ENCODE measurements at regions of chr11 and their contacts with region 1.

Region 1: GRCh38 chr11:62169091-62169847 is 20.7 kb upstream of the SCGB1D1 start:
- DNase-seq: no peak
- ATAC-seq: no peak
- H3K4me3 ChIP-seq: no peak overlapping the region
- H3K27ac ChIP-seq: no peak overlapping the region
- H3K4me1 ChIP-seq: peaks cover 0 to 4% of the 10 kb centered on the region in 2 experiments; a peak in 1 of 4 replicates
- H3K27me3 ChIP-seq: 0 out of 2 replicates have a peak, but pooled peaks cover 3% of the 10 kb centered on the region
- CTCF ChIP-seq: no peak
- POLR2A ChIP-seq: no peak
- RAD21 ChIP-seq: no peak

Region 2: GRCh38 chr11:61141601-61142028 is 1027.7 kb before region 1 on chr11:
- CTCF ChIA-PET with region 1: no interaction called
- POLR2A ChIA-PET with region 1: no interaction called
- RAD21 ChIA-PET with region 1: no interaction called
- intact Hi-C with region 1: no loop called
- DNase-seq: no peak
- ATAC-seq: peak; percentile 69
- H3K4me3 ChIP-seq: no peak overlapping the region
- H3K27ac ChIP-seq: no peak overlapping the region
- H3K4me1 ChIP-seq: peaks cover 5 to 7% of the 10 kb centered on the region in 2 experiments; a peak in 2 of 4 replicates
- H3K27me3 ChIP-seq: no peaks in the 10 kb centered on the region
- CTCF ChIP-seq: no peak
- POLR2A ChIP-seq: no peak
- RAD21 ChIP-seq: no peak

Region 3: GRCh38 chr11:62208785-62209144 is 39.5 kb after region 1 on chr11:
- CTCF ChIA-PET with region 1: no interaction called
- POLR2A ChIA-PET with region 1: no interaction called
- RAD21 ChIA-PET with region 1: no interaction called
- intact Hi-C with region 1: loop called (anchors 5 kb)
- DNase-seq: no peak
- ATAC-seq: no peak
- H3K4me3 ChIP-seq: no peak overlapping the region
- H3K27ac ChIP-seq: no peak overlapping the region
- H3K4me1 ChIP-seq: no peaks in the 10 kb centered on the region
- H3K27me3 ChIP-seq: no peaks in the 10 kb centered on the region
- CTCF ChIP-seq: no peak
- POLR2A ChIP-seq: no peak
- RAD21 ChIP-seq: no peak

Region 4: DNA sequence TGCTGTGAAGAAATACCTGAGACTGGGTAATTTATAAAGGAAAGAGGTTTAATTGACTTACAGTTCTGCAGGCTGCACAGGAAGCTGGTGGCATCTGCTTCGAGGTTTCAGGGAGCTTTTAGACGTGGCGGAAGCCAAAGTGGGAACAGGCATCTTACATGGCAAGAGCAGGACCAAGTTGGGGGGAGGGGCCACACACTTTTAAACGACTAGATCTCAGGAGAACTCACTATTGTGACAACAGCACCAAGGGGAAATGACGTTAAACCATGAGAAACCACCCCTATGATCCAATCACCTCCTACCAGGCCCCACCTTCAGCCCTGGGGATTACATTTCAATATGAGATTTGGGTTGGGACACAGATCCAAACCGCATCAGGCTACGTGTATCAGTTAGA is 140.7 kb after region 1 on chr11:
- CTCF ChIA-PET with region 1: interaction called, 5 read pairs
- POLR2A ChIA-PET with region 1: no interaction called
- RAD21 ChIA-PET with region 1: no interaction called
- intact Hi-C with region 1: loop called (anchors 2 kb)
- DNase-seq: no peak
- ATAC-seq: no peak
- H3K4me3 ChIP-seq: no peak overlapping the region
- H3K27ac ChIP-seq: no peak overlapping the region
- H3K4me1 ChIP-seq: no peaks in the 10 kb centered on the region
- H3K27me3 ChIP-seq: peaks cover 3% of the 10 kb centered on the region; the same call in 1 of the 2 replicates
- CTCF ChIP-seq: no peak
- POLR2A ChIP-seq: no peak
- RAD21 ChIP-seq: no peak

Region 5: GRCh38 chr11:62324738-62325556 is 155.7 kb after region 1 on chr11:
- CTCF ChIA-PET with region 1: no interaction called
- POLR2A ChIA-PET with region 1: no interaction called
- RAD21 ChIA-PET with region 1: interaction called in 1 of 2 experiments, 3 read pairs
- intact Hi-C with region 1: loop called (anchors 1 kb)
- DNase-seq: peak; percentile 34
- ATAC-seq: peak; percentile 100
- H3K4me3 ChIP-seq: no peak overlapping the region
- H3K27ac ChIP-seq: no peak overlapping the region
- H3K4me1 ChIP-seq: no peaks in the 10 kb centered on the region
- H3K27me3 ChIP-seq: no peaks in the 10 kb centered on the region
- CTCF ChIP-seq: peak; percentile 90 to 97 (median 93)
- POLR2A ChIP-seq: no peak
- RAD21 ChIP-seq: peak; percentile 86

Region 6: DNA sequence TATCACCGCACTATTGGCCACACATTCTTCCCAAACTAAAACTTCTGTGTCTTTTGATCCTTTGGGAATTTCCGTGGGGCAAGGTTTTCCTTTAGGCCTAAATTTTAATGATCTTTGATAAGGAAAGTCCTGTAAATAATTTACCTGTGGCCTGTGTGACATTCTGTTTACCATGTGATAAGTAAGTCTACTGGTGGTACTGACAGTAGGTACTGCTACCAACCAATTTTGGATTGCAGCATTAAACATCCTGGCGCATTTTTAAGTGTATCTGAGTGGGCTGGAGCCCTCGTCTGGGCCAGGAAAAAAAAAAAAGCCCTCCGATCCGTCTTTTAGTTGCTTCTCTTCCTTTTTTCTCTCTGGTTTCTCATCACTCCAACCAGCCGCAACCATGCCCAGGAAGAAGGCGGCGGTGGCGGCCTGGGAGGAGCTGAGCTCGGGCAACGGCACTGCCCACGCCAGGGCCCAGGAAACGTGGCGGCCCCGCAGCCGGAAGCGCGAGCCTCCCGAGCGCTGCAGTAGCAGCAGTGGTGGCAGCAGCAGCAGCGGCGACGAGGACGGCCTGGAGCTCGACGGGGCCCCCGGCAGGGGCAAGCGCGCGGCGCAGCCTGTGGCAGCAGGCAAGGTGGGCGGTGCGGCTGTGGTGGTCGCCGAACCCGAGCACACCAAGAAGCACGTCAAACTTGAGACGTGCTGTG is 201.6 kb after region 1 on chr11:
- CTCF ChIA-PET with region 1: no interaction called
- POLR2A ChIA-PET with region 1: no interaction called
- RAD21 ChIA-PET with region 1: no interaction called
- intact Hi-C with region 1: loop called (anchors 5 kb)
- DNase-seq: no peak
- ATAC-seq: no peak
- H3K4me3 ChIP-seq: no peak overlapping the region
- H3K27ac ChIP-seq: no peak overlapping the region
- H3K4me1 ChIP-seq: no peaks in the 10 kb centered on the region
- H3K27me3 ChIP-seq: no peaks in the 10 kb centered on the region
- CTCF ChIP-seq: no peak
- POLR2A ChIP-seq: no peak
- RAD21 ChIP-seq: no peak

Region 7: DNA sequence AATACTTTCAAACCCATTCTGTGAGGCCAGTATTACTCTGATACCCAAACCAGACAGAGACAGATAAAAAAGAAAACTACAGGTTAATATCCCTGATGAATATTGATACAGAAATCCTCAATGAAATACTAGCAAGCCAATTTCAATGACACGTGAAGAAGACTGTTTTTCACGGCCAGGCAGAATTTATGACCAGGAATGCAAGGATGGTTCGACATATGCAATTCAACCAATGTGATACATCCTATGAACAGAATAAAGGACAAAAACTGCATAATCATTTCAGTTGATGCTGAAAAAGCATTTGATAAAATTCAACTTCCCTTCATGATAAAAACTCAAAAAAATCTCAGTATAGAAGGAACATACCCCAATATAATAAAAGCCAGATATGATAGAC is 930.3 kb after region 1 on chr11:
- CTCF ChIA-PET with region 1: no interaction called
- POLR2A ChIA-PET with region 1: no interaction called
- RAD21 ChIA-PET with region 1: no interaction called
- intact Hi-C with region 1: no loop called
- DNase-seq: no peak
- ATAC-seq: no peak
- H3K4me3 ChIP-seq: no peak overlapping the region
- H3K27ac ChIP-seq: no peak overlapping the region
- H3K4me1 ChIP-seq: no peaks in the 10 kb centered on the region
- H3K27me3 ChIP-seq: 0 out of 2 replicates have a peak, but pooled peaks cover 14% of the 10 kb centered on the region
- CTCF ChIP-seq: no peak
- POLR2A ChIP-seq: no peak
- RAD21 ChIP-seq: no peak